H1 (cell line): ENCODE measurements at regions of chr11 and their contacts with region 1.

Region 1: DNA sequence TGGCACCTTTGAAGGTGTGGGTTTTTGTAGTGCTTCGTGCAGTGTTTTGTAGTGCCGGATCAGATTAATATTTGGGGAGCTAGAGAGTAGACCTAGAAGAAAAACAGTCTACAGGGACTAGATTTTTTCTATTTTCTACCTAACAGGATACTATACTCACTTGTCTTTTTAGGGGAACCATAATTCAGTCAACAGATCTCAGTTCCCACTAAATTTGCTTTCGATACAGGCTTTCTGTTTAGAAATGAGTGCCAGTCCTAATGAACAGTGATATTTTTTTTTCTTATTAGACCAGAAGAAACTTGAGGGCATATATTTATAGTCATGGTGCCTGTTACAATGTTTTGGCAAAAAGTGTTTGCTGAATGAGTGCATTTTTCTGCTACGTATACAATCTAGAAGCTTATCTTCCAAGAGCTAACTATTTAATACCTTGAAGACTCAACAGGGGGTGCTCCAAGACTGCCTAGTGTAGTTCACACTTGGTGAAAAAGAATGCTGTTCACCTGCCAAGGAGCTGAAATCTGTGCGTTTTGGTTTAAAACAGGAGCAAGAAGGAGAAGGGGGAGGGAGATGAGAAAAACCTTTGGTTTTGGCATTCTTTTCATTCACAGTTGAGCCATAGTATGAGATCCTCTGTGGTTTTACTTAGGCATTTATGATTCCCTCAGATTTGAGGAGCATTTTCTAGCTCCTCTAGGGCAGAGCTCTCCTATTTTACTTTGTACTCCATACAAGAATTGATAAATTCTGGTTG is 44.9 kb upstream of the VSTM5 start:
- DNase-seq: no peak
- H3K4me3 ChIP-seq: no peak overlapping the region
- H3K27ac ChIP-seq: no peak overlapping the region
- H3K4me1 ChIP-seq: peaks cover 0 to 4% (median under 1%) of the 10 kb centered on the region in 4 experiments; a peak in 2 of 7 replicates
- H3K27me3 ChIP-seq: no peaks in the 10 kb centered on the region
- CTCF ChIP-seq: peak in 2 of 3 experiments; percentile 70 to 74; a peak in 3 of 4 replicates
- EP300 ChIP-seq: no peak
- POLR2A ChIP-seq: no peak
- RAD21 ChIP-seq: peak; percentile 96 to 97

Region 2: GRCh38 chr11:93852242-93852641 is 43.0 kb before region 1 on chr11:
- CTCF ChIA-PET with region 1: no interaction called
- POLR2A ChIA-PET with region 1: no interaction called
- DNase-seq: peak in 1 of 2 experiments; percentile 26
- H3K4me3 ChIP-seq: no peak overlapping the region
- H3K27ac ChIP-seq: no peak overlapping the region
- H3K4me1 ChIP-seq: peaks cover 2 to 9% (median 4%) of the 10 kb centered on the region in 4 experiments; a peak in 4 of 7 replicates
- H3K27me3 ChIP-seq: no peaks in the 10 kb centered on the region; a peak in 2 of 7 replicates
- CTCF ChIP-seq: no peak
- EP300 ChIP-seq: no peak
- POLR2A ChIP-seq: no peak
- RAD21 ChIP-seq: no peak

Region 3: DNA sequence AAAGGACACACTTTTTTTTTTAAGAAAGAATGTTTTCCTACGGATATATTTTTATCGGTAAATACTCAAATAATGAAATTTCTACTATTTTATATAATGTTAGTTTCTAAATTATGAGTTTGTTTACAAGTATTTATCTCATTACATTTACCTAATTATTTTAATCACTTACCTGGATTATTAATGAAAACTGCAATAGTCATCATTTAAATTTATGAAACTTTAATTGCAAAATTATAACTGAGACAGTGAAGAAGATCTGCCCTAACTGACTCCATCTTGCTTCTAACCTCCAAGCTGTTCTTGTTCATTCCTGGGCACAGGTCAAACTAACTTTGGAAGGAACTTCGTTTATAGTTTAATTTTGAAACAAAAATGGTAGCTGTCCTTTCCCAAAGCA is 19.6 kb before region 1 on chr11:
- CTCF ChIA-PET with region 1: interaction called, 61 read pairs
- POLR2A ChIA-PET with region 1: interaction called, 4 read pairs
- DNase-seq: no peak
- H3K4me3 ChIP-seq: no peak overlapping the region
- H3K27ac ChIP-seq: no peak overlapping the region
- H3K4me1 ChIP-seq: peaks cover 3 to 11% (median 8%) of the 10 kb centered on the region in 4 experiments; a peak in 5 of 7 replicates
- H3K27me3 ChIP-seq: no peaks in the 10 kb centered on the region
- CTCF ChIP-seq: no peak
- EP300 ChIP-seq: no peak
- POLR2A ChIP-seq: no peak
- RAD21 ChIP-seq: no peak

Region 4: DNA sequence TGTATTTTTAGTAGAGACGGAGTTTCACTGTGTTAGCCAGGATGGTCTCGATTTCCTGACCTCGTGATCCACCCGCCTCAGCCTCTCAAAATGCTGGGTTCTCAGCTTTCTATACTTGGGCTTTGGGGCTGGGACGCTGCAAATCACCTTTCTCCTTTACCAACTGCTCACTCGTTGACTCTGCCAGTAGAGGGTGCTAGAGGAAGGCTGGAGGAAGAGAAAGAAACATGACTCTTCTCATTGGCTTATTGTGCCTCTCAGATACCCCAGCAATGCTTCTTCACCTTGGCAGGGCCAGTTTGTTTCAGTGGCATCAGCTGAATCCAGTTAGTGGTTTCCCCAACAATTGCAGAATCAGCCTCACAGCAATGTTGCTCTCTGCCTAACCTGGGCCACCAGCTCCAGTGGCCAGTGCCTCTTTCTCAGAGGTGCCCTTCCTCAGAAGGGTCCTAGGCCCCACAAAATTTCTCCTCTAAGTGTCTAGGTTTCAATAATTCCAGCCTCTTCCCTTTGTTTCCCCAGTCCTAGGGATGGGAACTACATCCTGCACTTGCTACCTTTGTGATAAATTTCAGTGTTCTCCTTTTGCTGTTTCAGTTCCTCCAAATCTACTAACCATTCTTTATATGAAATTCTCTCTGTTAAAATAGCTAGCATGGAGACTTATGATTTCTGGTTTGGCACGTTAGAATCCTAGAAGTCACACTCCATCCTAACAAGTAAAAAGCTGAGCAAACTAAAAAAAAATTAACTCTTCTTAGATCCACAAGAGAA is 26.6 kb after region 1 on chr11:
- CTCF ChIA-PET with region 1: interaction called, 48 read pairs
- POLR2A ChIA-PET with region 1: no interaction called
- DNase-seq: peak; percentile 43 to 71
- H3K4me3 ChIP-seq: no peak overlapping the region
- H3K27ac ChIP-seq: no peak overlapping the region
- H3K4me1 ChIP-seq: no peaks in the 10 kb centered on the region
- H3K27me3 ChIP-seq: no peaks in the 10 kb centered on the region
- CTCF ChIP-seq: peak; percentile 57 to 92 (median 81)
- EP300 ChIP-seq: no peak
- POLR2A ChIP-seq: no peak
- RAD21 ChIP-seq: peak; percentile 93

Region 5: DNA sequence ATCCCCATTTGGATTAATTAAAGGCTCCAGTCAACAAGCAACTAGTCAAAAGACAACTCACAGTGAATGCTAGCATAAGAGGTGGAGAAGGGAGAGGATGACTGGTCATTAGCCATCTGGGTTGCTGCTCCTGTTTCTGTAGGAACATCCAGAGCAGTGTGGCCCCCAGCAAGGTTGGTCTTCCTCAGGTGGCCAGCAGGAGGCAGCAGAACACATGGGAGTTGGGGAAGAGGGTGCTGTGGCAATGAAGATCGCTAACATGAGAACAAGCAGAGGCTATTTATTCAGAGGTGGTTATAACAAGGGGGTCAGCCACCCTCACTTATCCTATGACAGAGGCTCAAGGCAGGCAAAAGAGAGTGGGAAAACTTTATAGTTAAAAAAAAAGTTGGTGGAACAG is 430.4 kb after region 1 on chr11:
- CTCF ChIA-PET with region 1: interaction called, 28 read pairs
- POLR2A ChIA-PET with region 1: no interaction called
- DNase-seq: peak; percentile 61 to 94
- H3K4me3 ChIP-seq: no peak overlapping the region
- H3K27ac ChIP-seq: no peak overlapping the region
- H3K4me1 ChIP-seq: no peaks in the 10 kb centered on the region
- H3K27me3 ChIP-seq: peaks cover 0 to 1% (median 0%) of the 10 kb centered on the region in 4 experiments; a peak in 1 of 7 replicates
- CTCF ChIP-seq: peak; percentile 95 to 98 (median 97)
- EP300 ChIP-seq: no peak
- POLR2A ChIP-seq: no peak
- RAD21 ChIP-seq: peak; percentile 94 to 95

Region 6: DNA sequence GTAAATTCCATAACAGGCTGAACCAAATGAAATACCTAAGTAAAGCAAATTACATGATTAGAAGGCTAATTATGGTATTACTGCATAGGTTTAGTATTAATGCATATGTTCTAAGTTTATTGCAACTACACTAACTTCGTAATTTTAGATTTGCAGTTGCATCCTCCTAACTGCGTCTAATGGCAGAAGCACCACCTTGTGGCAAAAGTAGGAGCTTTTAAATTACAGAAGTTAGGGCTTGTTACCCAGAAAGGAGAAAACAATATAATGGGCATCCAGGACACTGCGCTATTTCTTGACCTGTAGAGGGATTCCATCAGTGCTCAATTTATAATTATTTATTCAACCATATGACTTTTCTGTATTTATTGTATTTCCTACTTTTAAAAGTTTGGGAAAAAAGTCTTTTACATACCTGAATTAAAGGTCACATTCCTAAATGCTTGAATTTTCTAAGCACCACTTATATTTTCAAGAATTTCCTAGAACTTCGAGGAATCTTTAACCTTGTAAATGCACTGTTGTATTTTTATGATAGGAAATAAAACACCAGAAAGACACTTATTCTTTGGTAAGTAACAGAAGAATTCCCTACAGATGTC is 522.2 kb after region 1 on chr11:
- CTCF ChIA-PET with region 1: interaction called, 26 read pairs
- POLR2A ChIA-PET with region 1: no interaction called
- DNase-seq: no peak
- H3K4me3 ChIP-seq: no peak overlapping the region
- H3K27ac ChIP-seq: no peak overlapping the region
- H3K4me1 ChIP-seq: no peaks in the 10 kb centered on the region
- H3K27me3 ChIP-seq: no peaks in the 10 kb centered on the region
- CTCF ChIP-seq: peak in 2 of 3 experiments; percentile 50 to 57; a peak in 3 of 4 replicates
- EP300 ChIP-seq: no peak
- POLR2A ChIP-seq: no peak
- RAD21 ChIP-seq: peak; percentile 70 to 74